ENCODE measurements at regions of chr6 and their contacts with region 1.

Region 1: GRCh38 chr6:53484476-53485280 is 60.2 kb downstream of the GCLC start:
- DNase-seq: peak in 1 of 2 donors; percentile 82
- ATAC-seq: peak; percentile 58 to 93 (median 84)
- H3K4me3 ChIP-seq: peak overlapping the region in 6 of 10 donors; percentile 4 to 31 (median 14)
- H3K27ac ChIP-seq: peak overlapping the region; percentile 6 to 88 (median 71)
- H3K4me1 ChIP-seq: peaks cover 2 to 38% (median 22%) of the 10 kb centered on the region in 9 donors
- H3K27me3 ChIP-seq: peaks cover 0 to 18% (median 0%) of the 10 kb centered on the region in 7 donors
- CTCF ChIP-seq: peak; percentile 84 to 99 (median 97)

Region 2: DNA sequence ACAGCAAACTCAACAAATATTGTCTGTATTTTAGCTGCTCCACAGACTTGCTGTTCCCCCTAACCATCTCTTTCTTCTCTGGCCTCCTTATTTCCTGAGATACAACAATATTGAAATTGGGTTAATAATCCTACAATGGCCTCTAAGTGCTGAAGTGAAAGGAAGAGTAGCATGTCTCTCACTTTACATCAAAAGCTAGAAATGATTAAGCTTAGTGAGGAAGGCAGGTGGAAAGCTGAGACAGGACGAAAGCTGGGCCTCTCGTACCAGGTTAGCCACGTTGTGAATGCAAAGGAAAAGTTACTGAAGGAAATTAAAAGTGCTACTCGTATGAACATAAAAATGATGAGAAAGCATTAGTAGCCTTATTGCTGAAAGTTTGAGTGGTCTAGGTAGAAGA is 199.8 kb before region 1 on chr6:
- intact Hi-C with region 1: loop called in 1 of 10 experiments (anchors 10 kb)
- DNase-seq: no peak
- ATAC-seq: no peak
- H3K4me3 ChIP-seq: no peak overlapping the region
- H3K27ac ChIP-seq: no peak overlapping the region
- H3K4me1 ChIP-seq: peaks cover 3 to 56% (median 35%) of the 10 kb centered on the region in 9 donors
- H3K27me3 ChIP-seq: no peaks in the 10 kb centered on the region
- CTCF ChIP-seq: no peak

Region 3: DNA sequence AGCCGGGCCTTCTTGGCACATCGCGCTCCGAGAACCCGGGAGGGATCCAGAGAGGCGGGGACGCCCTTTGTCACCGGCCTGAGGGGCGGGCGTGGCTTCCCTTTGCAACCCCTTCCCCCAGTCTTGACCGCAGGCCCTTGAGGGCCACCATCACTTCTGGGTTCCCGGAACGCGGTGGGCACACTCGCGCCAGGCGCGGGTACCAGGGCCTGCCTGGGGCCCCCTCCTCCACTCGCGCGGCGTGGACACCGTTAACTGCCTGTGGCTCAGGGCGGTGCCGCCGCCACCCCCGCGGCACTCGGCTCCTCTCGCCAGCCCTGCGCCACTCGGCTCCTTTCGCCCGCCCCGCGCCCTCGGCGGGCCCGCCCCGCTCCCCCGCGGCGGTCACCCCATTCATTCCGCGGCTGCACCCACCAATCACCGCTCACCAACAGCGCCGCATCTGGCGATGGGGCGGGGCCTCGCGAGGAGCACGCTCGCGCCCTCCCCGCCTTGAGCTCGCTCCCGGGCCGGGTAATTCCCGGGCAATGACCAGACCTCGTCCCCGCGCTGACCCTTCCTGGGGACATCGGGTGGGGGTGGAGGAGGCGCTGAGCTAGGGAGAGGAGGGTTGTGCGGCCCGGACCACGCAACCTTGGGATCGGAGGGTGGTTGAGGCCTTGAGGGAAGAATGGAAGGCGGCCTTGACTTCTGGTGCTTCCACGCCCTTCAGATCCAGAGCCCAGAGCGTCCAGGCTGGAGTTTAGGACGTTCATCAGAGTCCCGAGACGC is 125.4 kb before region 1 on chr6:
- intact Hi-C with region 1: loop called in 4 of 10 experiments (anchors 2 to 10 kb)
- DNase-seq: peak; percentile 96 to 97
- ATAC-seq: peak; percentile 96 to 99 (median 98)
- H3K4me3 ChIP-seq: peak overlapping the region; percentile 48 to 89 (median 70)
- H3K27ac ChIP-seq: peak overlapping the region; percentile 89 to 98 (median 96)
- H3K4me1 ChIP-seq: peaks cover 4 to 23% (median 14%) of the 10 kb centered on the region in 9 donors
- H3K27me3 ChIP-seq: no peaks in the 10 kb centered on the region
- CTCF ChIP-seq: peak in 1 of 9 donors; percentile 26

Region 4: DNA sequence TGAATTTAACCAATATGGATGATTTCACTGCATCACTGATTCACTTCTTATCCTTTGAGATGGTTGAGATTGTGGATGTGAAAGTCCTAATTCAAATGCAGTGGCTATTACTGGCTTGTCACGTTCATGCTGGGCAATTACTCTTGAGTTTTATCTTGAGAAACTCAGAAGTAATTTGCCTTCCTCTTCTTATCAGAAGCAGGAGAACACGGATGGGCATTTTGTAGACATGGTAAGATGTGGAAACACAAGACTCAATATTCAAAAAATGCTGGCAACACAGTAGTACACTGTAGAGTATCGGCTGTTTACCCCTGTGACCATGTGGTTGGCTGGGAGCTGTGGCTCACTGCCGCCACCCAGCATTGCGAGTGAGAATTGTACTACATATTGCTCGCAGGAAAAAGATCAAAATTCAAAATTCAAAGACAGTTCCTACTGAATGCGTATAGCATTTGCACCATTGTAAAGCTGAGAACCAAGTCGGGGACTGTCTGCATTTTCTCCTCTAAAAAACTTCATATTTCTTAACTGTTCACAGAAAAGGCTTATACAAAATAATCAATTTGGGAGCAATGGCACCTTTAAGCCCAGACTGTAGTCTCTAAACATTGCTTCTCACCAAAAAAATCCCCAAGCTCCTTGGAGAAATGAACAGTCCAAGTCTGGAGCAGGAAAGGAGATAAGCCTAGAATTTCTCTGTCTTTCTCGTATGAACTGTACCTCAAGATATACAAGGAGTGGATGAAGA is 74.0 kb before region 1 on chr6:
- intact Hi-C with region 1: loop called in 1 of 10 experiments (anchors 10 kb)
- DNase-seq: peak; percentile 34 to 36
- ATAC-seq: peak; percentile 67 to 92 (median 86)
- H3K4me3 ChIP-seq: no peak overlapping the region
- H3K27ac ChIP-seq: no peak overlapping the region
- H3K4me1 ChIP-seq: peaks cover 0 to 18% (median 0%) of the 10 kb centered on the region in 9 donors
- H3K27me3 ChIP-seq: no peaks in the 10 kb centered on the region
- CTCF ChIP-seq: peak; percentile 35 to 84 (median 75)

Region 5: DNA sequence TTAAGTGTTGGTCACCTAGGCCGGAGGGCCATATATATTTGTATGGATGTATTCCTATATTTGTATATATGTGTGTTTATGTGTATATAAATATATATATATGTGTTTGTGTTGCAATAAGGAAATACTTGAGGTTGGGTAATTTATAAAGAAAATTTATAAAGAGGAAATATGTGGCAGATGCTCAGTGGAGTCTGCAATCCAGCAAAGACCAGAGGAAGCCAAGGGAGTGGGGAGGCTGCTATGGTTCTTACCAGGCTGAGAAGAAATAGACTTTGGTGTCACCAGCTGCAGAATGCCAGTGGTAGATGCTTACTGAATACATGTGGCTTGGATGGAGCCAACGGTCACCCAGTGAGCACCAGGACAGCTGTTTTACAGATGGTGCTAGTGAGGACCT is 38.5 kb before region 1 on chr6:
- intact Hi-C with region 1: loop called in 2 of 10 experiments (anchors 5 kb)
- DNase-seq: no peak
- ATAC-seq: no peak
- H3K4me3 ChIP-seq: no peak overlapping the region
- H3K27ac ChIP-seq: no peak overlapping the region
- H3K4me1 ChIP-seq: peaks cover 0 to 13% (median 0%) of the 10 kb centered on the region in 9 donors
- H3K27me3 ChIP-seq: no peaks in the 10 kb centered on the region
- CTCF ChIP-seq: no peak

Measured in heart right ventricle (tissue), 16 donors.